CD4-positive, alpha-beta memory T cell (primary cell): ENCODE measurements at regions of chr9 and their contacts with region 1.

Region 1: GRCh38 chr9:84261082-84261746 is 79.3 kb downstream of the SLC28A3 start:
- DNase-seq: peak in 4 of 5 donors; percentile 25 to 45 (median 33)
- H3K4me3 ChIP-seq: no peak overlapping the region
- H3K4me3 Mint-ChIP-seq: peak overlapping the region in 6 of 8 donors; percentile 41 to 68 (median 55)
- H3K27ac ChIP-seq: no peak overlapping the region
- H3K27ac Mint-ChIP-seq: peak overlapping the region in 1 of 7 donors; percentile 7
- H3K4me1 ChIP-seq: peaks cover 3% of the 10 kb centered on the region
- H3K4me1 Mint-ChIP-seq: peaks cover 4 to 8% (median 4%) of the 10 kb centered on the region in 4 donors
- H3K27me3 ChIP-seq: no peaks in the 10 kb centered on the region
- H3K27me3 Mint-ChIP-seq: peaks cover 2 to 7% of the 10 kb centered on the region in 2 donors

Region 2: GRCh38 chr9:83937911-83938323 is 323.3 kb before region 1 on chr9:
- CTCF ChIA-PET with region 1: interaction called, 23 read pairs
- POLR2A ChIA-PET with region 1: no interaction called
- intact Hi-C with region 1: no loop called
- DNase-seq: peak; percentile 47 to 72 (median 67)
- H3K4me3 ChIP-seq: no peak overlapping the region
- H3K4me3 Mint-ChIP-seq: peak overlapping the region in 1 of 8 donors; percentile 2
- H3K27ac ChIP-seq: no peak overlapping the region
- H3K27ac Mint-ChIP-seq: no peak overlapping the region
- H3K4me1 ChIP-seq: no peaks in the 10 kb centered on the region
- H3K4me1 Mint-ChIP-seq: no peaks in the 10 kb centered on the region
- H3K27me3 ChIP-seq: no peaks in the 10 kb centered on the region
- H3K27me3 Mint-ChIP-seq: no peaks in the 10 kb centered on the region

Region 3: GRCh38 chr9:84296146-84296843 is 35.1 kb after region 1 on chr9:
- CTCF ChIA-PET with region 1: interaction called, 14 read pairs
- POLR2A ChIA-PET with region 1: no interaction called
- intact Hi-C with region 1: no loop called
- DNase-seq: peak in 4 of 5 donors; percentile 10 to 56 (median 18)
- H3K4me3 ChIP-seq: no peak overlapping the region
- H3K4me3 Mint-ChIP-seq: peak overlapping the region in 4 of 8 donors; percentile 18 to 74 (median 57)
- H3K27ac ChIP-seq: peak overlapping the region; percentile 19
- H3K27ac Mint-ChIP-seq: peak overlapping the region; percentile 51 to 92 (median 86)
- H3K4me1 ChIP-seq: peaks cover 48% of the 10 kb centered on the region
- H3K4me1 Mint-ChIP-seq: peaks cover 38 to 56% (median 45%) of the 10 kb centered on the region in 4 donors
- H3K27me3 ChIP-seq: no peaks in the 10 kb centered on the region
- H3K27me3 Mint-ChIP-seq: no peaks in the 10 kb centered on the region